Mammary epithelial cell (primary cell): ENCODE measurements at regions of chr9 and their contacts with region 1.

Region 1: GRCh38 chr9:36023260-36024048 is 13.3 kb upstream of the RECK start:
- DNase-seq: peak; percentile 52
- H3K4me3 ChIP-seq: no peak overlapping the region
- H3K27ac ChIP-seq: no peak overlapping the region
- H3K4me1 ChIP-seq: peaks cover 5% of the 10 kb centered on the region
- H3K27me3 ChIP-seq: no peaks in the 10 kb centered on the region
- CTCF ChIP-seq: peak; percentile 91 to 94

Region 2: GRCh38 chr9:35814841-35815543 is 208.5 kb before region 1 on chr9 and contains the start of gene HINT2:
- CTCF ChIA-PET with region 1: no interaction called
- dilution Hi-C with region 1: no loop called
- in situ Hi-C with region 1: no loop called
- intact Hi-C with region 1: no loop called
- DNase-seq: peak; percentile 99
- H3K4me3 ChIP-seq: peak within 1 kb of the TSS; percentile 74 to 91 (median 85)
- H3K27ac ChIP-seq: peak within 1 kb of the TSS; percentile 64
- H3K4me1 ChIP-seq: peaks cover 23% of the 10 kb centered on the region
- H3K27me3 ChIP-seq: no peaks in the 10 kb centered on the region
- CTCF ChIP-seq: no peak
- total RNA-seq, gene HINT2: 11.7 to 31.9 TPM

Region 3: DNA sequence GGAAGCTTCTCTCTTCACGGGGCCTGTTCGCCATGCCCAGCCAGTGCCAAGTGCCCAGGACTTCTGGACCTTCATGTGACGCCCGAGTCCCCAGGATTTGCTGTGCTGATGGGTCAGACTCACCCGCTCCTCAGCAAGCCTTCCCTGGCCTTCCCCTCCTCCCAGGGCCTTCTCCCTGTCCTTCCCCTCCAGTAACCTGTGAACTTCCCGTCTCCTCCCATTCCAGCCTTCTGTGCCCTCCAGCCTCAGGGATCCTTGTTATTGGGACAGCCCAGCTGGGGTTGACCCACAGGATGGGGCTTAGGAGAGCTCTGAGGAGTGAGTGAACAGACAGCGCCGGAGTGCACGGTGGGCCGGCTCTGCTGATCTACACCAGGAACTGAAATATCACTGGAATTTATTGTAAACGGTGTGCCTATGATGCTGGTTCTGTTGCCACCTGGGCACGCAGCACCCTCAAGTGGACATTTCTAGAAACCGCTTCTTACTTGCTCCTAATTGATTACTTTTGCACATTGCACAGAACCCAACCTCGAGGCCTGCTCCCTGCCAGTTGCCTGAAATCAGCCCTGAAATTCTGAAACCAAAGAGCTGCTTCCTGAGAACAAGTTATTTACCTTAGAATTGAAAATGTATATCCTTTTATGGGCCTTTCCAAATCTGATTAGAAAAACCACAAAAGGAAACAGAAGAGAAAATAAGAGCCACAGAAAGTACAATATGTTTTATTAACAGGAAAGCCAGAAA is 112.7 kb before region 1 on chr9:
- CTCF ChIA-PET with region 1: interaction called, 4 read pairs
- dilution Hi-C with region 1: no loop called
- in situ Hi-C with region 1: loop called in 1 of 2 experiments (anchors 10 kb)
- intact Hi-C with region 1: loop called (anchors 2 kb)
- DNase-seq: peak; percentile 56
- H3K4me3 ChIP-seq: no peak overlapping the region
- H3K27ac ChIP-seq: no peak overlapping the region
- H3K4me1 ChIP-seq: peaks cover 50% of the 10 kb centered on the region
- H3K27me3 ChIP-seq: no peaks in the 10 kb centered on the region
- CTCF ChIP-seq: peak; percentile 75 to 79

Region 4: DNA sequence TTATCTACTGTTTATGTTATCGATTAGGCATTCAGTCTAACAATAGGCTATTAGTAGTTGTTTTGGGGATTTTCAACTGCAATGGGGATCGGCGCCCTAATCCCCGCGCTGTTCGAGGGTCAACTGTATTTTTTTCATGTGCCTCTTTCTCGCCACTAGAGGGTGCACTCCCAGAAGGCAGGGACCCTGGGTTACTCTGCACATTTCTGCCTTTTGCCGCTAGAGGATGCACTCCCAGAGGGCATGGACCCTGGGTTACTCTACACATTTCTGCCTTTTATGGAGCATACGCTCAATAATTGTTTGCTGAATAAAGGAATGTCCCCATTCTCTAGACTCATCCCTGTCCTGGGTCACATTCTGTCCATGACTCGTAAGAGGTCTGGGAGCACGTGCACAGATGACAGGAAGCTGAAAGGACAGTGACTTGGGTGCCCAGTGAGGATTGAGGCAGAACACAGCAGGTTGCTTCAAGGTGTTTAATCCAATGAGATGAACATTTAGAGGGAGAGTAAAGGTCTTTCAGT is 14.6 kb before region 1 on chr9:
- CTCF ChIA-PET with region 1: no interaction called
- dilution Hi-C with region 1: no loop called
- in situ Hi-C with region 1: no loop called
- intact Hi-C with region 1: loop called (anchors 1 kb)
- DNase-seq: peak; percentile 17
- H3K4me3 ChIP-seq: no peak overlapping the region
- H3K27ac ChIP-seq: no peak overlapping the region
- H3K4me1 ChIP-seq: no peaks in the 10 kb centered on the region
- H3K27me3 ChIP-seq: peaks cover 17% of the 10 kb centered on the region
- CTCF ChIP-seq: peak; percentile 100

Region 5: GRCh38 chr9:36102742-36103495 is 79.5 kb after region 1 on chr9:
- CTCF ChIA-PET with region 1: no interaction called
- dilution Hi-C with region 1: no loop called
- in situ Hi-C with region 1: no loop called
- intact Hi-C with region 1: loop called (anchors 5 kb)
- DNase-seq: peak; percentile 66
- H3K4me3 ChIP-seq: no peak overlapping the region
- H3K27ac ChIP-seq: no peak overlapping the region
- H3K4me1 ChIP-seq: peaks cover 10% of the 10 kb centered on the region
- H3K27me3 ChIP-seq: no peaks in the 10 kb centered on the region
- CTCF ChIP-seq: peak; percentile 82

Region 6: DNA sequence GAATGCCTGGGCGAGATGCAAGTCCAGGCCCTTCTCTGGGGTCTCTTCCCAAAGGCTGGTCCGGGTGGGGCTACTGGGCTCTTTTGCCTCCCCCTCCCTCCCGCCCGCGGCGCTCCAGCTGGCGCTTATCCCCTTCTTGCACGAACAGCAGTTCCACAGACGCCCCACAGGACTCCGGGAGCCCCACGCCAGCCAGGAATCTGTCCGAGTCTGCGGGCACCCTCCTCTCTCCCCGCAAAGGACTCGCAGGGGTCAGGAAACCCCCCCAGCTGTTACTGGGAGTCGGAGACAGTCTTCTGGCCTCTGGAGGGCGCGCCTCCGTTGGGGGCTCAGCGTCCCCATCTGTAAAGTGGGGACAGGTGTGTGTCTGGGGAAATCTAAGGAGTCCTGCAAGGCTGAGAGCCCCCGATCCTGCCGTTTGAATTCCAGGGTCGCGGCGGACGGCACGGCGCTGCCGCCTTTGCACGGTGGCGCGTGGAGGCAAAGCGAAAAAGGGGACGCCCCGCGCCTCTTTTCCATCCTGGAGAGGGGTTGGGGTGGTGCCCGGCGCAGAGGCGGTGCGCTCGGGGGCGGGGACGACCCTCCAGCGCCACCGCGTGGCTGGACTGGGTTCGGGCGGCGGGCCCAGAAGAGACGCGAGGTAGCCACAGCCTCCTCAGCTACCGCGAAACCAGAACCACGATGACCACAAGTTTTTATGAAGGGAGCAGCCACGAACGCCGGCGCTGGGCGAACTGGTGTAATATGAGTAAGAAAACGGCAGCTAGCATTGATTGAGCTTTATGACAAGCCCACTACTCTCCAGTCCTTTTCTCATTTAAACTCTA is 142.9 kb after region 1 on chr9:
- CTCF ChIA-PET with region 1: no interaction called
- dilution Hi-C with region 1: no loop called
- in situ Hi-C with region 1: loop called in 1 of 2 experiments (anchors 5 kb)
- intact Hi-C with region 1: no loop called
- DNase-seq: peak; percentile 71
- H3K4me3 ChIP-seq: peak overlapping the region; percentile 18 to 38 (median 25)
- H3K27ac ChIP-seq: no peak overlapping the region
- H3K4me1 ChIP-seq: peaks cover 5% of the 10 kb centered on the region
- H3K27me3 ChIP-seq: no peaks in the 10 kb centered on the region
- CTCF ChIP-seq: peak; percentile 58 to 88